CD4-positive, alpha-beta T cell (primary cell): ENCODE measurements at regions of chr1 and their contacts with region 1.

Region 1: GRCh38 chr1:37458528-37458927 is 15.9 kb upstream of the ZC3H12A start:
- DNase-seq: peak in 2 of 14 experiments; percentile 19 to 36
- ATAC-seq: no peak
- H3K4me3 ChIP-seq: no peak overlapping the region
- H3K4me3 Mint-ChIP-seq: no peak overlapping the region
- H3K27ac ChIP-seq: no peak overlapping the region
- H3K27ac Mint-ChIP-seq: no peak overlapping the region
- H3K4me1 ChIP-seq: peaks cover 9% of the 10 kb centered on the region
- H3K4me1 Mint-ChIP-seq: peaks cover 6% of the 10 kb centered on the region
- H3K27me3 ChIP-seq: no peaks in the 10 kb centered on the region
- H3K27me3 Mint-ChIP-seq: no peaks in the 10 kb centered on the region
- CTCF ChIP-seq: no peak

Region 2: DNA sequence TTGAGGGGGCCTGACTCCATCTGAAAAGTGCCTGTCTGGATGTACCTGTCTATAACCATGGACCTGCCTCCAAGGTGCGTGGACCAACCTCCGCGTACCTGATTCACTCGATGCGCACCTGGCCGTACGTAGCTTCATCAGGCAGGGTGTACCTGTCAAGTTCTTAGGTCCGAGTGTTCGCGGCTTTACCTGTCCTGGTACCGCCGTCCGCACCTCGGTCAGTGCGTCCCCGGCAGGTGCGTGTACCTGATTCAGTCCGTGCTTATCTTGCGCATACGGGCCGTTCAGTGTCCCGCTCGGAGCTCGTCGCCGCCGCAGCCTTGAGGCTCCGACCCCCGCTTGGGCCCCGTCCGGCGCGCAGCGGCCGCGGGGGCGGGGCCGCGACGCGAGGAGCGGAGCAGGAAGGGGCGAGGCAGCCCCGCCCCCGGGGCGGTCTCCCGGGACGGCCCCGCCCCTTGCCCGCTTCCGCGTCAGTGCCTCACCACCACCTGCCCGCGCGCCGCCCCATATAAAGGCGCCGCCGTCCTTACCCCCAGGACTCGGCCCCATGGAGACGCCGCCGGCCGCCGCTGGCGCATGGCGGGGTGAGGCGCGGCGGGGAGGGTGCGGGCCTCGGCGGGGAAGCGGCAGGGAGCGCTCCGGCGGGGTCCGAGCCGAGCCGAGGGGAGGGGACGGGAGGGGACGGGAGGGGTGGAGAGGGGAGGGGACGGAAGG is 15.7 kb after region 1 on chr1 and contains the start of gene ZC3H12A:
- CTCF ChIA-PET with region 1: interaction called, 6 read pairs
- POLR2A ChIA-PET with region 1: interaction called, 14 read pairs
- intact Hi-C with region 1: loop called in 1 of 2 experiments (anchors 2 kb)
- DNase-seq: peak; percentile 83 to 98 (median 93)
- ATAC-seq: peak; percentile 61
- H3K4me3 ChIP-seq: peak within 1 kb of the TSS; percentile 92
- H3K4me3 Mint-ChIP-seq: peak within 1 kb of the TSS; percentile 97
- H3K27ac ChIP-seq: peak within 1 kb of the TSS; percentile 95 to 97
- H3K27ac Mint-ChIP-seq: peak within 1 kb of the TSS; percentile 100
- H3K4me1 ChIP-seq: peaks cover 69% of the 10 kb centered on the region
- H3K4me1 Mint-ChIP-seq: peaks cover 66% of the 10 kb centered on the region
- H3K27me3 ChIP-seq: no peaks in the 10 kb centered on the region
- H3K27me3 Mint-ChIP-seq: no peaks in the 10 kb centered on the region
- CTCF ChIP-seq: no peak
- total RNA-seq, gene ZC3H12A: 164 to 165 TPM

Region 3: DNA sequence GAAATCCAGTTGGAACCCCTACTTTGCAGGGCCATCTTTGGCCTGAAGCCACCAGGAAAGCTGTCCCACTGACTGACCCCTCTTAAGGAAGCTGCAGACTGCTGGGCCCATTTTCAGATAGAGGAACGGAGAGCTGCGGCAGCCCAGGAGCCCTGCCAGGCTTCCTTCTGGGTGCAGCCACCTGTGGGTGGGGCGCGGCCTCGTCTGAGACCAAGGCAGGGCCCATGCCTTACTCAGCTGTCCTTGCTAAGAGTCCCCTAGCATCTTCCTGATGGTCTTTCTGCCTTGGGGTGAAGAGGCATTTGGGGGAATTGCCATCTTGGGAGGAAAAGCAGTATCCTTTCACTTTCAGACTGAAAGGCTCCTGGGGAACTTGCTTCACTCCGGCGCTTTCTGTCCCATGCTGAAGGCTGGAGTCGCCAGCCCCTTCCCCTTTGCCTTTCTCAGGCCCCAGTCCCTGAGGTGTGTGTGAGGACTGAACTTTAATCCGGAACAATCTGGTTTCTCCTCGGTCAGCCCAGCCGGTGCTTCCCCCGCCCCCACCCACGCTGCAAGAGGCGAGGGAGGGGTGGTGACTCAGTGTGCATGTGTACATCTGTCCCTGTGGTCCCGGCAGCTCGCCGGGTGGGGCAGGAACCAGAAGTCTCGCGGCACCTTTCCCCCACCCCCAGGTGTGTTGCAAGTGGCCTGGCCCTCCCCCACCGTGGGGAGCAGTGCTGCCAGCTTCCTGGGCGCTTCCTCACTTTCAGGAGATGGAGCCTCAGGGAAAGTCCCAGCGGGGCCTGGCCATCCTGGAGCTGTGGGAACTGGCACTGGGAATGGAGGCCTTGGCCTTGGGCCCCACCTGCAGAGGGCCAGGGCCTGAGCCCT is 21.0 kb after region 1 on chr1:
- CTCF ChIA-PET with region 1: interaction called, 120 read pairs
- POLR2A ChIA-PET with region 1: interaction called, 14 read pairs
- intact Hi-C with region 1: no loop called
- DNase-seq: peak; percentile 63 to 96 (median 89)
- ATAC-seq: peak; percentile 57
- H3K4me3 ChIP-seq: peak overlapping the region; percentile 92
- H3K4me3 Mint-ChIP-seq: peak overlapping the region; percentile 97
- H3K27ac ChIP-seq: peak overlapping the region; percentile 95 to 97
- H3K27ac Mint-ChIP-seq: peak overlapping the region; percentile 100
- H3K4me1 ChIP-seq: peaks cover 67% of the 10 kb centered on the region
- H3K4me1 Mint-ChIP-seq: peaks cover 56% of the 10 kb centered on the region
- H3K27me3 ChIP-seq: no peaks in the 10 kb centered on the region
- H3K27me3 Mint-ChIP-seq: no peaks in the 10 kb centered on the region
- CTCF ChIP-seq: no peak